Activated CD8-positive, alpha-beta T cell treated with anti-CD3 and anti-CD28 coated beads for 36 hours (primary cell): ENCODE measurements at regions of chr16 and their contacts with region 1.

Region 1: GRCh38 chr16:1942810-1943726 is at the start of gene MSRB1:
- DNase-seq: peak; percentile 100
- ATAC-seq: peak; percentile 99
- H3K4me3 Mint-ChIP-seq: peak within 1 kb of the TSS; percentile 82
- H3K27ac Mint-ChIP-seq: peak within 1 kb of the TSS; percentile 86
- H3K4me1 Mint-ChIP-seq: peaks cover 23% of the 10 kb centered on the region
- H3K27me3 Mint-ChIP-seq: no peaks in the 10 kb centered on the region
- CTCF ChIP-seq: no peak
- total RNA-seq, gene MSRB1: 15.5 to 18.1 TPM

Region 2: GRCh38 chr16:1929578-1930337 is 13.3 kb before region 1 on chr16:
- CTCF ChIA-PET with region 1: interaction called, 14 read pairs
- POLR2A ChIA-PET with region 1: interaction called, 4 read pairs
- intact Hi-C with region 1: no loop called
- DNase-seq: peak; percentile 92
- ATAC-seq: peak; percentile 98
- H3K4me3 Mint-ChIP-seq: peak overlapping the region; percentile 67
- H3K27ac Mint-ChIP-seq: no peak overlapping the region
- H3K4me1 Mint-ChIP-seq: peaks cover 2% of the 10 kb centered on the region
- H3K27me3 Mint-ChIP-seq: no peaks in the 10 kb centered on the region
- CTCF ChIP-seq: peak; percentile 98